AG04450 (cell line): ENCODE measurements at regions of chr19 and their contacts with region 1.

Region 1: DNA sequence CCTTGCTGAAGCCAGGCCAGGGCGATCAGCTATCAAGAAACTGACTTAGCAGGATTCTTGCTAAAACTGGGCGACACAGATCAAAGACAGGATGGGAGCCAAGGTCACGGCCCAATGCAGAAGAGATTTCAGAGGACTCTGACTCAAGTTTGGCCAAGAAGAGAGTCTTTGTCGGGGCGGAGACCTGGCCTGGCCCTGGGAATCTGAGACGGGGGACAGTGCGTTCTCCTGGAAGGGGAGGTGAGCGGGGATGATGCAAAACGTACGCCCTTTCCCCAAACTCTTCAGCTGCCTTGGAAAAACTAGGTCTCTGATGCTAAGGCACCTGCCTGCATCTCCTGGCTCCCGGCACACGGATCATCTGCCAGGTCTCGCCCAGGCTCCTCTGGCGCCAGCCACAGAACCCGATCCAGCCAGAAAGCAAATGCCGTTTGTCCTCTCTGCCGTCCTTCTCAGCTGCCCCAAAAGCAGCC is 9.8 kb downstream of the MVB12A start:
- DNase-seq: no peak
- H3K4me3 ChIP-seq: no peak overlapping the region
- H3K27ac ChIP-seq: no peak overlapping the region
- H3K27me3 ChIP-seq: no peaks in the 10 kb centered on the region
- CTCF ChIP-seq: no peak

Region 2: GRCh38 chr19:17616961-17617806 is 187.5 kb after region 1 on chr19:
- CTCF ChIA-PET with region 1: no interaction called
- POLR2A ChIA-PET with region 1: interaction called, 15 read pairs
- DNase-seq: no peak
- H3K4me3 ChIP-seq: 0 out of 2 replicates have a peak overlapping the region, but pooled peaks have one; percentile 22
- H3K27ac ChIP-seq: no peak overlapping the region
- H3K27me3 ChIP-seq: peaks cover 2% of the 10 kb centered on the region
- CTCF ChIP-seq: no peak